Activated CD4-positive, alpha-beta T cell treated with anti-CD3 and anti-CD28 coated beads, Interleukin-2, amount 10 ng/mL, durations not matched to agents 24 days and 14 days (primary cell): ENCODE measurements at regions of chr3 and their contacts with region 1.

Region 1: GRCh38 chr3:120348981-120349818 is at the start of gene LRRC58:
- DNase-seq: peak; percentile 97
- H3K4me3 Mint-ChIP-seq: peak within 1 kb of the TSS; percentile 91
- H3K27ac Mint-ChIP-seq: peak within 1 kb of the TSS; percentile 89
- H3K4me1 Mint-ChIP-seq: peaks cover 44% of the 10 kb centered on the region
- H3K27me3 Mint-ChIP-seq: peaks cover 25% of the 10 kb centered on the region
- total RNA-seq, gene LRRC58: 28.1 and 29.4 TPM in 2 replicates

Region 2: GRCh38 chr3:119463171-119464169 is 885.7 kb before region 1 on chr3 and contains the start of gene TMEM39A:
- intact Hi-C with region 1: loop called (anchors 2 kb)
- DNase-seq: peak; percentile 100
- H3K4me3 Mint-ChIP-seq: peak within 1 kb of the TSS; percentile 99
- H3K27ac Mint-ChIP-seq: peak within 1 kb of the TSS; percentile 96
- H3K4me1 Mint-ChIP-seq: peaks cover 30% of the 10 kb centered on the region
- H3K27me3 Mint-ChIP-seq: peaks cover 2% of the 10 kb centered on the region
- total RNA-seq, gene TMEM39A: 44.0 and 52.2 TPM in 2 replicates

Region 3: GRCh38 chr3:120245386-120245785 is 103.8 kb before region 1 on chr3:
- intact Hi-C with region 1: loop called (anchors 1 kb)
- DNase-seq: no peak
- H3K4me3 Mint-ChIP-seq: no peak overlapping the region
- H3K27ac Mint-ChIP-seq: no peak overlapping the region
- H3K4me1 Mint-ChIP-seq: no peaks in the 10 kb centered on the region
- H3K27me3 Mint-ChIP-seq: peaks cover 26% of the 10 kb centered on the region

Region 4: GRCh38 chr3:120324192-120324591 is 25.0 kb before region 1 on chr3:
- intact Hi-C with region 1: no loop called
- DNase-seq: no peak
- H3K4me3 Mint-ChIP-seq: no peak overlapping the region
- H3K27ac Mint-ChIP-seq: no peak overlapping the region
- H3K4me1 Mint-ChIP-seq: peaks cover 5% of the 10 kb centered on the region
- H3K27me3 Mint-ChIP-seq: no peaks in the 10 kb centered on the region

Region 5: DNA sequence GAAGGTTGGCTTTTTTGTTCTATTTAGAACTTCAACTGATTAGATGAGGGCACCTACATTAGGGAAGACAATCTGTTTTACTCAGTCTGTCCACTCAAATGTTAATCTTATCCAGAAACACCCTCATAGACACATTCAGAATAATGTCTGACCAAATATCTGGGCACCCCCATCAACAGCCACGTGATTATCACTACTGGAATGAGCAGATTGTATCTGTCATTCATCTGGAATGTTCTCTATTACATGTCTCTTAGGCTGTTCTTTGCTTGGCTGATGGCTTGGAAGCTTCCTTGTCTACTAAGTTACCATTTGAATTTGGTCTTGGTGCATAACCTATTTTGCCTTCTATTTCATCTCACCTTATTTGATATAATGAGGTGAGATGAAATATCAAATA is 15.6 kb after region 1 on chr3:
- intact Hi-C with region 1: loop called (anchors 2 kb)
- DNase-seq: no peak
- H3K4me3 Mint-ChIP-seq: no peak overlapping the region
- H3K27ac Mint-ChIP-seq: no peak overlapping the region
- H3K4me1 Mint-ChIP-seq: no peaks in the 10 kb centered on the region
- H3K27me3 Mint-ChIP-seq: peaks cover 43% of the 10 kb centered on the region

Region 6: DNA sequence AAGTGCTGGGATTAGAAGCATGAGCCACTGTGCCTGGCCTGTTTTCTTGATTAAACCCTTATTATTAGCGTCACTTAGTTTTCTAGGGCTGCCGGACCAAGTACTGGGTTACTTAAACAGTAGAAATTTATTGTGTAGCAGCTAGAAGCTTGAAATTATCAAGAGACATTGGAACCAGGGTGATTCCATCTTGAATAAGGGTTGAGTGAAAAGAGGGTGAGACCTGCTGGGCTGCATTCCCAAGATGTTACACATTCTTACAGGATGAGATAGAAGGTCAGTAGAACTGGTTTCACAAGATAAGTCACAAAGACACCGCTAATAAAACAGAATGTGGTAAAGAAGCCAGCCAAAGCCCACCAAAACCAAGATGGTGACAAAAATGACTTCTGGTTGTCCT is 120.2 kb after region 1 on chr3:
- intact Hi-C with region 1: no loop called
- DNase-seq: no peak
- H3K4me3 Mint-ChIP-seq: no peak overlapping the region
- H3K27ac Mint-ChIP-seq: no peak overlapping the region
- H3K4me1 Mint-ChIP-seq: no peaks in the 10 kb centered on the region
- H3K27me3 Mint-ChIP-seq: peaks cover 13% of the 10 kb centered on the region

Region 7: DNA sequence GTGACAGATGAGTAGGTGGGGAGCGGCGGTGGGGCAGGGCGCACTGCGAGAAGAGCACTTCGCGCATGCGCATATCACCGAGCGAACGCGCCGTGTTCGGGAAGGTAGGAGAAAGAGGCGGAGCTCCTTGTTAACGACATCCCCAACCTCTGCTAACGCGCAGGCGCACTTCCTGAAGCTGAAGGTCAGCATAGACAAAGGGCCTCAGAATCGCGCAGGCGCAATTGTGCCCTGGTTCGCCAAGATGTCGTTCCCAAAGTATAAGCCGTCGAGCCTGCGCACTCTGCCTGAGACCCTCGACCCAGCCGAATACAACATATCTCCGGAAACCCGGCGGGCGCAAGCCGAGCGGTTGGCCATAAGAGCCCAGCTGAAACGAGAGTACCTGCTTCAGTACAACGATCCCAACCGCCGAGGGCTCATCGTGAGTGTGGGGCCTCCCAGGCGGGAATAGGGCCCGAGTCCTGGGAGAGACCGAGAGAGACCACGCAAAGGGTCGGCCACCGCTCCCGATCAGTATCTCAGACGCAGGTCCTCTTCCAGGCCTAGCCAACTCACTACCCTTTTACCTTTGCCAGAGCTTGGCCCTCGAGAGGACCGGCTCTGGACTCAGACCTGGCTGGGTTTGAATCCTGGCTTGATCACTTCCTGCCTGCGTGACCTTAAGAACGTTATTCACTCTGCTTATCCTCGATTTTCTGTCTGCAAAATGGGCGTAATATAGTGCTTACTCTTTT is 247.1 kb after region 1 on chr3 and contains the start of gene NDUFB4:
- intact Hi-C with region 1: loop called (anchors 10 kb)
- DNase-seq: peak; percentile 98
- H3K4me3 Mint-ChIP-seq: peak within 1 kb of the TSS; percentile 91
- H3K27ac Mint-ChIP-seq: peak within 1 kb of the TSS; percentile 94
- H3K4me1 Mint-ChIP-seq: peaks cover 15% of the 10 kb centered on the region
- H3K27me3 Mint-ChIP-seq: peaks cover 14% of the 10 kb centered on the region
- total RNA-seq, gene NDUFB4: 116 and 123 TPM in 2 replicates

Region 8: DNA sequence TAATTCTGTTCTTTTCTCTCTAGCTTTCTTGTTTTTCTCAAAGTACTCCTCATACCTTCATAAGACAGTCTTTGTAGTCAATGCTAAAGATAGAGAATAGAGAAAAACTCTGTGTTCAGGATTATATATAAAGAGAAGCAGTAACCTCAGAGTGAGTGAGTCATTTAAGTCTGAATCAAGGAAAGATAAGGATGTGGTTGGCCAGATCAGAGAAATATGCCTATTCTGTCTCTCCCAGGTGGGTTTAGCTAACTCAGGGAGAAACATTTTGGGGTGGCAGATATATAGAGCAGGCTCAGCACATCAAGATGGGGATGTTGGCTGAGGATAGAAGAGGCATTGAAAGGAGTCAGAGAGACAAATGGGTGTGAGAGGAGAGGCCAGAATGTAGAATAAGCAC is 424.7 kb after region 1 on chr3:
- intact Hi-C with region 1: loop called (anchors 10 kb)
- DNase-seq: peak; percentile 73
- H3K4me3 Mint-ChIP-seq: no peak overlapping the region
- H3K27ac Mint-ChIP-seq: no peak overlapping the region
- H3K4me1 Mint-ChIP-seq: peaks cover 10% of the 10 kb centered on the region
- H3K27me3 Mint-ChIP-seq: no peaks in the 10 kb centered on the region